Posterior vena cava (tissue), 2 donors: ENCODE measurements at regions of chr3 and their contacts with region 1.

Region 1: DNA sequence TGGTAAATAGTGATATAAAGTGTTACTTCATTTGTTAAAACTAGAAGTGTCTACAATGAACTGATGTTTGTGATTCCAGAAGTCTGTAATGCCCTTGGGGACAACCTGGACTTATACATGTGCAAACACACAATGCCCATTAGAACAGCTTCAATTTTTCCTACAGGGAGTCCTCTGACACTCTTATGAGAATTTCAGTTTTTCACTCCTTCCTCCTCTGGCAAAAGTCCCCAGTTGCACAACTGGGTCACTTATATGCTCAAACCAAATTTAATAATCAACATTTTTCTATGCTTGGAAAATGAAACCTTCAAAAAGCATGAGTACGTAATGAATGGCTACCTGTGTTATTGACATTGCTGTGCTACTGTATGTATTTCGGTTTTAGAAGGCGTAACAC is at the start of gene OR5H15:
- DNase-seq: no peak
- total RNA-seq, gene OR5H15: not detected

Region 2: GRCh38 chr3:98048586-98048985 is 117.8 kb before region 1 on chr3:
- intact Hi-C with region 1: no loop called
- DNase-seq: no peak

Region 3: DNA sequence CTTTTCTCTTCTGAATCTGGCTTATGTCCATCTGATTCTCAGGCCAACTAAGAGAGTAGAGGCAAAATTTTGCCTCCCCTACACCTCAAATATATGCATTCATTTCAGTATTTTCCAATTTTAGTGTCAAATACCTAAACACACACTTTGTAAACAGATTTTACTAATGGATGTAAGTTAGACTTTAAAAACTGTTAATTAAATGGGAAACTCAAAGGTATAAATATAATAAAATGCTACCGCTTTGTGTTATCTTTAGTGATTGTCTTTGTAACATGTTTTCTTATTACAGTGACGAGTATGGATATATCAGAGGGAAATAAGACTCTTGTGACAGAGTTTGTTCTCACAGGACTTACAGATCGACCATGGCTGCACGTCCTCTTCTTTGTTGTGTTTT is 79.5 kb before region 1 on chr3 and contains the start of gene OR5AC2:
- intact Hi-C with region 1: no loop called
- DNase-seq: no peak
- total RNA-seq, gene OR5AC2: not detected

Region 4: GRCh38 chr3:98109807-98110549 is 56.4 kb before region 1 on chr3:
- intact Hi-C with region 1: no loop called
- DNase-seq: no peak

Region 5: DNA sequence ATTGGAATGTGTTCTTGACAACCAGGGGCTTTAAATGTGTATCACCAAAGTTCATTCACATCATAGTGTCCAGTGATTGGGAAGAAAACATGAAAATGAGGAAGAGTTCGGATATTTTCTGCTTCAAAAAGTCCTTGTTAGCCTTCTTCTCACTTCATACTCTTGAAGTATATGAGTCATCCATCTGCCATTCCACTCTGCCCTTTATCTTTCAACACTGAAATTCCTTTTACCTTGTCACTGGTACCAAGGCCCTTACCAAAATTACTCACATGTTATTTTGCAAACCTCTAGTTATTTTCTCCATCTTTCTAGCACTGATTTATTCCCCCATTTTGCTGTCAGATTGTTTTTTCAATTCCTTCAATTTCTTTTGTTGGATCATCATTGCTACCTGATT is 32.6 kb after region 1 on chr3:
- intact Hi-C with region 1: loop called in 1 of 2 experiments (anchors 2 kb)
- DNase-seq: no peak